Heart right ventricle (tissue), 16 donors: ENCODE measurements at regions of chr7 and their contacts with region 1.

Region 1: DNA sequence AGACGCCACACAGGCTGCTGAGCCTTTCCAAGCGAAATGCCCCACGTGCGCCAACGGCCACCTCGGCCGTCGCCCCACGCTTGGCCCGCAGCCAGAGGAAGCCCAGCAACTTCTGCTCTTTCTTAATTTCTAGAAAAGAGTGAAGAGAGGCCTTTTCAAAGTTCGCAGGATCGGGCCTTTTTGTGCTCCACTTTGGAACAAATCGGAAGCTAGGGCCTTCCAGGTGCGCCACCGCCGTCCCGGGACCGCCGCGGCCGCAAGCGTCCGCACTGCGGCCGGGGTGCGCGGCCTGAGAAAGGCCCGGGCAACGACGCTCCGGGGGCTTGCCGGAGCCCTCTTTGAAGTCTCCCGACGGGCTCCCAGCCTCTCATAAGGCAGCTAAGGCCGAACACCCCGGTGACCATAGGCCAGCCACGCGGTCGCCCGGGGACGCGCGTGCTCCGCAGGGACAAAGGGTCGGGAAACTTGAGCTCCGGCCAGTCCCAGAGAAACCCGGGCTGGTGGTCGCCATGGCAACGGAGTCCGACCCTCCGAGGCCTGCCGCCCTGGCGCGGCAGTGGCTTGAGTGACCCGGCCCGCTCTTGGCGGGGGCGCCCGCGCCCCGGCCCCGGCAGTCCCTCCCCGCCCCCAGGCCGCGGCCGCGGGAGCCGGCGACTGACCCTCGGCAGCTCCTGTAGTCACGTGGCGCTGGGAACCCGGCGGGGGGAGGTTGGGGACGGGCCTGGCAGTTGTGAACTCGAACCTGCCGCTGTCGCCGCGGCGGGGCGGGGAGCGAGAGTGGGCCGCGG is at the start of gene REPIN1:
- DNase-seq: peak; percentile 94 to 95
- ATAC-seq: peak; percentile 79 to 95 (median 87)
- H3K4me3 ChIP-seq: peak within 1 kb of the TSS; percentile 74 to 99 (median 97)
- H3K27ac ChIP-seq: peak within 1 kb of the TSS; percentile 90 to 100 (median 98)
- H3K4me1 ChIP-seq: peaks cover 14 to 61% (median 31%) of the 10 kb centered on the region in 9 donors
- H3K27me3 ChIP-seq: no peaks in the 10 kb centered on the region
- CTCF ChIP-seq: no peak
- total RNA-seq, gene REPIN1: 88.7 to 132 (median 114) TPM

Region 2: DNA sequence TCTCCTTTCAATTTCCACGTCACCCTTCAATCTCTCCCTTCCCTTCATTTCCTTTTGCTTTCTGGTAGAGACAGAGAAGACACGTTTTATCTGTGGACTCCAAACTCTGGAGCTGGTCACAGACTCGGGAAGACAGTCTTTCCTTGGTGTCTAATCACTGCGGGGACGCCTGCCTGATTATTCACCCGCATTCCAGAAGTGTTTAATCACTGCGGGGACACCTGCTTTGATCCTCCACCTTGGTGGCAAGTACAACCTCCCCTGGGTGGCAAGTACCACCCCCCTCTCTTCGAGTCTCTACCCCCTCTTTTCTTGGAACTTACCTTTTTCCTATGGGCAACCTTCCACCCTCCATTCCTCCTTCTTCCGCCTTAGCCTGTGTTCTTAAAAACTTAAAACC is 60.4 kb before region 1 on chr7:
- intact Hi-C with region 1: no loop called
- DNase-seq: no peak
- ATAC-seq: no peak
- H3K4me3 ChIP-seq: no peak overlapping the region
- H3K27ac ChIP-seq: no peak overlapping the region
- H3K4me1 ChIP-seq: peaks cover 0 to 3% (median 0%) of the 10 kb centered on the region in 9 donors
- H3K27me3 ChIP-seq: peaks cover 0 to 5% (median 0%) of the 10 kb centered on the region in 7 donors
- CTCF ChIP-seq: no peak

Region 3: DNA sequence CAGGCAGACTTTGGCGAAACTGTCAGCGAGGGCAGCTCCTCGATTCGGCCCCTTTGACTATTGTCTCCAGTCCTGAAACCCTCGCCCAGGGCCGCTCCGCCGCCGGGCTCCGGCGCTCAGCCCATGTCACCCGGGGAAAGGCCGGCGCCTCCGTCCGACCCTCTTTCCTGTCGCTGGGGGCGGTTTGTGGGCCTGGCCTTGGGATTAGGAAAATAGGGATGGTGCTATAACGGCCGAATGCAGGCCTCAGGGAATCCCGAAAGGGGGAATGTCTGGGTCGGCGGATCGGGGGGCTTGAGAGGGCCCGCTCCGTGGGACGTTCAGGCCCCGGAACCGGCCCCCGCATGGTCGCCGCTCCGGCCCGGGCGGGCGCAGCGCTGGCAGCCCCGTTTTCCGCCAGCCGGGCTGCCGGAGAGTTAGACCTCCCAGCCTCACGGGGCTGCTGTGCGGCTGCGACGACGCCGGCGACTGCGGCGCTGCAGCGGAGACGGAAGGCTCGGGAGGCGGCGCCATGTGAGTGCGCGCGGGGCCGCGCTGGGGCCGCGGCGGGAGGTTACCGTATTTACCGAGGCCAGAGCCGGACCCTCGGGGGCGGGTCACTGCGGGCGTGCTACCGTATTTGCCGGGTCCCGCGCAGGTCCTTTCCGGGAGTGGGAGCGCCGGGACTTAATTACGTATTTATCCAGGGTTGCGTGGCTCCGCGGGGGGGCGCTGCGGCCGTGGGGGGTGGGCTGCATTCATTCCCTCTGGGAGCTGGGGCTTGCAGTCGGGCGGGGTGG is 36.7 kb after region 1 on chr7:
- intact Hi-C with region 1: loop called in 7 of 10 experiments (anchors 1 to 5 kb)
- DNase-seq: peak; percentile 92
- ATAC-seq: peak; percentile 92 to 97 (median 96)
- H3K4me3 ChIP-seq: peak overlapping the region; percentile 42 to 89 (median 71)
- H3K27ac ChIP-seq: peak overlapping the region; percentile 73 to 99 (median 97)
- H3K4me1 ChIP-seq: peaks cover 14 to 36% (median 27%) of the 10 kb centered on the region in 9 donors
- H3K27me3 ChIP-seq: no peaks in the 10 kb centered on the region
- CTCF ChIP-seq: peak in 5 of 9 donors; percentile 23 to 41 (median 33)

Region 4: GRCh38 chr7:150410680-150411346 is 42.5 kb after region 1 on chr7:
- intact Hi-C with region 1: loop called in 5 of 10 experiments (anchors 2 to 5 kb)
- DNase-seq: no peak
- ATAC-seq: no peak
- H3K4me3 ChIP-seq: no peak overlapping the region
- H3K27ac ChIP-seq: no peak overlapping the region
- H3K4me1 ChIP-seq: peaks cover 3 to 18% (median 13%) of the 10 kb centered on the region in 9 donors
- H3K27me3 ChIP-seq: no peaks in the 10 kb centered on the region
- CTCF ChIP-seq: no peak

Region 5: DNA sequence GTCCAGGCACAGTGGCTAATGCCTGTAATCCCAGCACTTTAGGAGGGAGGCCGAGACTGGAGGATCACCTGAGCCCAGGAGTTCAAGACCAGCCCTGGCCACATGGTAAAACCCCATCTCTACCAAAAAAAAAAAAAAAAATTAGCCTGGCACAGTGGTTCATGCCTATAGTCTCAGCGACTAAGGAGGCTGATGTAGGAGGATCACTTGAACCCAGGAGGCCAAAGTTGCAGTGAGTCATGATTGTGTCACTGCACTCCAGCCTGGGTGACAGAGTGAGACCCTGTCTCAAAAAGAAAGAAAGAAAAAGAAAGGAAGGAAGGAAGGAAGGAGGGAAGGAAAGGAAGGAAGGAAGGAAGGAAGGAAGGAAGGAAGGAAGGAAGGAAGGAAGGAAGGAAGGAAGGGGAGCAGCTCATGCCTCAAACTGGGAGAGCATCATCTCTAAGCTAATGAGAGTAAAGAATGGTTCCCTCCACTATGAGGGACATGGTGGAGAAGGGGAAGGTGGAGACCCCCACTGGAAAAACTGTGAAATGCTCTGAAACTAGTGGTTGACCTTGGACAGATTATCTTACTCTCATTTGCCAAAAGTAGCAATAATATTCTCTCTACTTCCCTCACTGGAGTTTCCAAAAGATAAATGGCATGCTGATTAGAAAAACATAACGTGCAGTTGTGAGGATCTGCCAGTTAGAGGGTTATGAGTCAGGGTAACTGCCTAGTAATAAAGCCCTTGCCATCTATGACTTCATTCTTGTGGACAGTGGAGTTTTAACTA is 385.7 kb after region 1 on chr7:
- intact Hi-C with region 1: loop called in 1 of 10 experiments (anchors 10 kb)
- DNase-seq: peak in 1 of 2 donors; percentile 43
- ATAC-seq: peak; percentile 36 to 67 (median 54)
- H3K4me3 ChIP-seq: no peak overlapping the region
- H3K27ac ChIP-seq: peak overlapping the region in 9 of 10 donors; percentile 25 to 87 (median 83)
- H3K4me1 ChIP-seq: peaks cover 20 to 68% (median 51%) of the 10 kb centered on the region in 9 donors
- H3K27me3 ChIP-seq: no peaks in the 10 kb centered on the region
- CTCF ChIP-seq: peak in 7 of 9 donors; percentile 8 to 62 (median 50)